ENCODE measurements at regions of chrX and their contacts with region 1.

Region 1: DNA sequence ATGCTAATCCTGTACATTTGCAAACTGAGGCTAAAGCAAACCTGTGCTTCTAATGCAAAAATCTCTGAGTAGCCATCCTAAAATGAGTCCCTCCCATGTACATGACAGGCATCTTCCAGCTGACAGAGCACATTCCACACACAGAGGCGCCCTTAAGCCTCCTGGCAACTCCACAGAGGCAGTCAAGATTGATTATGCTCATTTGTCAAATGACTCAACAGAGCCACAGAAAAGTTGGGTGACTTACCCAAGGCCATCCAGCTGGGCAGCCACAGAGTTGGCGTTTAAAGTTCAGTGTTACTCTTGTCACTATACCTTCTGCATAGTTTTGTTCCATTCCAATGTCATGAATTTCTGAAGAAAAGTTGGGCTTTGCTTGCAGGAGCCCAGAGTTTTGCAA is 394.6 kb upstream of the FGF13 start:
- DNase-seq: no peak
- ATAC-seq: no peak; the same call in 1 of the 2 replicates
- H3K4me3 ChIP-seq: no peak overlapping the region
- H3K27ac ChIP-seq: no peak overlapping the region
- H3K4me1 ChIP-seq: no peaks in the 10 kb centered on the region
- H3K27me3 ChIP-seq: no peaks in the 10 kb centered on the region
- CTCF ChIP-seq: no peak
- POLR2A ChIP-seq: no peak
- RAD21 ChIP-seq: no peak

Region 2: DNA sequence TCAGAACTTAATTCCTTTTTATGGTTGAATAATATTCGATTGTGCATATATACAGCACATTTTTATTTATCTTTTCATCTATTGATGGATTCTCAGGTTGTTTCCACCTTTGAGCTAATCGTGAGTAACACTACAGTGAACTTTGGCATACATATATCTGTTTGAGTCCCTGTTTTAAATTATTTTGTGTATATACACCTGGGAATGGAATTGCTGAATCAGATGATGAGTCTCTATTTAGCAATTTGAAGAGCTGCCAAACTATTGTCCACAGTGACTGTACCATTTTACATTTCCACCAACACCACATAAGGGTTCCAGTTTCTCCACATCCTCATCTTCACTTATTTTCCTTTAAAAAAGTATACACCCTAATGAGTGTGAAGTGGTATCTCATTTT is 228.3 kb before region 1 on chrX:
- CTCF ChIA-PET with region 1: no interaction called
- POLR2A ChIA-PET with region 1: no interaction called
- dilution Hi-C with region 1: no loop called
- in situ Hi-C with region 1: no loop called
- intact Hi-C with region 1: no loop called
- DNase-seq: no peak
- ATAC-seq: no peak
- H3K4me3 ChIP-seq: no peak overlapping the region
- H3K27ac ChIP-seq: no peak overlapping the region
- H3K4me1 ChIP-seq: no peaks in the 10 kb centered on the region
- H3K27me3 ChIP-seq: no peaks in the 10 kb centered on the region
- CTCF ChIP-seq: no peak
- POLR2A ChIP-seq: no peak
- RAD21 ChIP-seq: no peak

Region 3: DNA sequence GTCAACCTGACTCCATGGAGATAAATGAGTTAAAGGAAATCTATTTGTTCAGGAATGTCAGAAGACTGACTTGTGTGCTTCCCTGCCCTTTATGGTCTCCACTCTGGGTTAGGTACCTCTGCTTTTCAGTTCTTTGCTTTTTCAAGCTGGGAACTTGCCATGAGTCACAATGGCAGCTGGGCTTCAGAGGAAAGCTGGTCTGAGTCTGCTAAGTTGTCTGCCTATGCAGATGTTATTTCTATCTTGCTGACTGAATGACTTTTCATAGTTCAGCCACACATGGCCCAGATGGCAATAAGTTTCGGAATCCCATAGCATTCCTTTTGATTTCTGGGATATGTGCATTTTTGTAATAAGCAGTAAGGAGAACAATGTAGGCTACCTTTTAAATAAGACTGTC is 56.6 kb before region 1 on chrX:
- CTCF ChIA-PET with region 1: no interaction called
- POLR2A ChIA-PET with region 1: no interaction called
- dilution Hi-C with region 1: no loop called
- in situ Hi-C with region 1: no loop called
- intact Hi-C with region 1: loop called (anchors 10 kb)
- DNase-seq: no peak
- ATAC-seq: no peak
- H3K4me3 ChIP-seq: no peak overlapping the region
- H3K27ac ChIP-seq: no peak overlapping the region
- H3K4me1 ChIP-seq: no peaks in the 10 kb centered on the region
- H3K27me3 ChIP-seq: no peaks in the 10 kb centered on the region
- CTCF ChIP-seq: no peak
- POLR2A ChIP-seq: no peak
- RAD21 ChIP-seq: no peak

Region 4: DNA sequence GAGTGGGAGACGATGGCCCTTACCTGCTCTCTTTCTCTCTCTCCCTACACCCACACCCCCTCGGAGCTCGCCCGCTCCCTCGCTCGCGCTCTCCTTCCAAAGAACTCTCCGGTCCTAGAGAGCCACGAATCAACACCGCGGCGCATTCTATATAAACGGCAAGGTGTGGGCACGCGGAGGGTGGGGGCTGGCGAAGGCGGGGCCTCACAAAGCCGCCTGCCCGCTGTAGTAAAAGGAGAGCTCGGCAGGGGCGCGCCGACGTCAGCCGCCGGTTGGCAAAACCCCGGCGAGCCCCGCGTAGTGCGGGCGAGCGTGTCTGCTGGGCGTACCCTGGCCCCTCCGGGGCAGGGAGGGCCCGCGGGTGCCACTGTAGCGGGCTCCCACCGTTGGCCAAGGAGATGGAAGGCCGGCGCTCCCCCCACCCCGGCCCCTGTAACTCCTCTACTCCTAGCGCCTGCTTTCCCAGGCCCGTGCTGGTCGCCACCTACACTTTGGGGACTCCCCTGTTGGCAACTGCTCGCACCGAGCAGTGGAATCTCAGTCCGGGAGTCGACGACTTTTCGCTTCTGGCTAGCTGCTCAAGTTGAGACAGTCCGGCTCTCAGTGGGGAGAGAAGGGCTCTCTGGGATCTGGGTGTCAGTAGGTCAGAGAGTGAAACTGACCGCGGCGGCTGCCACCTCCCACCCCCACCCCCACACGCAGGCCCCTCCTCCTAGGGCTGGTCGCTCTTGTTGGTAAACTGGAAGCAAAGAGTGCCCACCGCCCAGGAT is 99.0 kb after region 1 on chrX:
- CTCF ChIA-PET with region 1: no interaction called
- POLR2A ChIA-PET with region 1: no interaction called
- dilution Hi-C with region 1: no loop called
- in situ Hi-C with region 1: no loop called
- intact Hi-C with region 1: no loop called
- DNase-seq: no peak
- ATAC-seq: peak; percentile 27; the same call in 1 of the 2 replicates
- H3K4me3 ChIP-seq: no peak overlapping the region
- H3K27ac ChIP-seq: no peak overlapping the region
- H3K4me1 ChIP-seq: no peaks in the 10 kb centered on the region
- H3K27me3 ChIP-seq: peaks cover 10% of the 10 kb centered on the region; the same call in 1 of the 2 replicates
- CTCF ChIP-seq: no peak
- POLR2A ChIP-seq: no peak
- RAD21 ChIP-seq: no peak

Region 5: GRCh38 chrX:139506333-139506732 is 400.3 kb after region 1 on chrX:
- CTCF ChIA-PET with region 1: no interaction called
- POLR2A ChIA-PET with region 1: no interaction called
- dilution Hi-C with region 1: no loop called
- in situ Hi-C with region 1: no loop called
- intact Hi-C with region 1: no loop called
- DNase-seq: no peak
- ATAC-seq: no peak
- H3K4me3 ChIP-seq: no peak overlapping the region
- H3K27ac ChIP-seq: no peak overlapping the region
- H3K4me1 ChIP-seq: no peaks in the 10 kb centered on the region
- H3K27me3 ChIP-seq: no peaks in the 10 kb centered on the region
- CTCF ChIP-seq: no peak
- POLR2A ChIP-seq: no peak
- RAD21 ChIP-seq: no peak